Right ventricle myocardium superior (tissue), 1 donor: ENCODE measurements at regions of chr17 and their contacts with region 1.

Region 1: DNA sequence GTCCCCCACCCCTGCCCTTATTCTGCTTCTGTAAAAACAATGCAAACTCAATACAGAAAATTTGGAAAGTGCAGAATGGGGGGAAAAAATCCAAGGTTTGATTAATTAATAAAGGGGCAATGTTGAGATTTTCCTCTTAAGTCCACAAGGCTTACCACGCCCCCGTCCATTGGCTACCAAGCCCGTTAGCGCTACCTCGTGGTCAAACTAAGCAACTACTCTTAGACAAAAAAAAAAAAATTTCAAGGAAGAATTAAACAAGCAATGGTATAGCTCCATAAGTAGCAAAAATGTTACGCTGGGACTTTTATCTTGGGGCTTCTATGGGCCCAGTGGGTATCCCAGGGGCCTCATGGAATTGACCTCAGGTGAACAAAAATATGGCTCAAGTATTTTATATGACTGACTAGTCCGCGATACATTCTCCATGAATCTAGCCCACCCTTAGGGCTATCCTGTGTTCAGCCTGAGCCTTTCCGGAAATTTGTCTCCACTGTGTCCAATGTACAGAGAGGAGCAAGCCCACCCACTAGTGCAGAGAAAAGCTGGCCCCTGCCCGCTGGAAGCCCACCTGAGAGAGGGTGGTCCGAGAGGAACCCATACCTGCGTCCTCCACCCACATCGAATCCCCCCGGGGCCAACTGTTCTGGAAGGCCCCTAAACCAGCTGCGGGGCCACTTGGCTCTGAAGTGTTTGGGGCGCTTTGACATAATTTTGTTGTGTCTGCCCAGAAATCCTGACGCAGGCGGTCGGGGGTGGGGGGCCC is 19.1 kb upstream of the TEX2 start:
- DNase-seq: peak; percentile 54
- ATAC-seq: peak; percentile 62

Region 2: DNA sequence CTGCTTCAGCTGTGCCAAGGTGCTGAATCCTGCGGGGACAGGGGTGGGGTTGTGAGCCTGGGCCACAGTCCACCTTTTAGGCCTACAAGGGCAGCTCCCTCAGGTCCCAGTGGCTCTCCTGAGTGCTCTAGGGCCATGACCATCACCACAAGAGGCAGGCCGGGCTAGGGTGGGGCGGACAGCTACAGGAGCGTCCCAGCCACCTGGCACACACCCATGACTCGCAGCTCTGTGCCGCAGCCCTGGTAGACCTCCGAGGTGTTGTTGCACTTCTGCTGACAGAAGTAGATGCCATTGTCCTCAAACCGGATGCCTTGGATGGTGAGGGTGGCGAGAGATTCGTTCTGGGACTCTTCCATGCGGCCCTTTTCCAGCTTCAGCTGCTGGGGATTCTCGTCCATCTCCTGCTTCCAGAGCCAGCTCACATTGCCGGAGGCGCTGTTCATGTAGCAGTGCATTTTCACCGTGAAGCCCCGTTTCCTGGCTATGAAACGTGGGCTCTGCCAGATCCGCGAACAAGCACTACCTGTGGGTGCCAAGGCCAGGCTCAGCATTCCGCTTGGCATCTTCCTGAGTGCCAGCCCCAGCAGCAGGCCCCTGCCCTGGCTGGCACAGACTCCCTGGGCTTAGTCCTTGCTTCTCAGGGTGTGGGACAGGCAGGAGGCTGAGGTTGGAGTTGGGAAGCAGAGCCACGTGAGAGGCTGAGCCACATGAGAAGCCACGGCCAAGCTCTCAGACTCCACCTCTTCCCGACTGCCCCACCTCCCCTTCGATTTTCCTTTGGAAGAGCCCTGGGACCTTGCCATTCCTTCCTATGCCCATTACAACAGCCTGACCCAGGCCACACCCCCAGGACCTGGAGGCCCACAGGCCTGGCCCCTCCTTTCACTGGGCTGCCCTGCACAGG is 352.0 kb before region 1 on chr17:
- intact Hi-C with region 1: loop called (anchors 10 kb)
- DNase-seq: peak; percentile 50
- ATAC-seq: no peak

Region 3: DNA sequence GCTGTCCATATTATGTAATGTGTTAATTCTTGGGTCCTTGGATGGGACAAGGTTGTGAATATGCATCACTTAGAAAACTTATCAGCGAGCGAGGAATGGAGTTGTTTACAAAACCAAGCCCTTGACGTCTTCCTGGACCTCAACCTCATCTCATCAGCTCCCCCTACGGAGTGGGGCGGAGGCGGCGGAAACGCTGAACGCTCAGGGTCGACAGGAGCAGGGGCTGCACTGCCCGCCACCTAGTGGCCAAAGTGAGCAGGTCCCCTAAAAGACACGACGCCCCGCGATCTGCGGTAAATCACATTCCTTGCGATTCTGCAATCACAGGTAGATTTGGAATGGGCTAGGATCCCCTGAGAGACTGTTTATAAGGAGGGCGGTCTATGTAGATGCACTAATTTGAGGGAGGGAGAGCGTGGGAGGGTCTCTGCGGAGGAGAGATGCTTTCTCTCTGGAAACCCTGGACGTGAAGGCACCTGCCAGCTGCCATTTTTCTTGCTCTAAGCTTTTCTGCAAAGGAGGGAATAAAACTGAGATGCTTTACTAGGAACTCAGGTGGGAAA is 256.3 kb before region 1 on chr17:
- intact Hi-C with region 1: loop called (anchors 5 kb)
- DNase-seq: peak; percentile 87
- ATAC-seq: peak; percentile 83

Region 4: DNA sequence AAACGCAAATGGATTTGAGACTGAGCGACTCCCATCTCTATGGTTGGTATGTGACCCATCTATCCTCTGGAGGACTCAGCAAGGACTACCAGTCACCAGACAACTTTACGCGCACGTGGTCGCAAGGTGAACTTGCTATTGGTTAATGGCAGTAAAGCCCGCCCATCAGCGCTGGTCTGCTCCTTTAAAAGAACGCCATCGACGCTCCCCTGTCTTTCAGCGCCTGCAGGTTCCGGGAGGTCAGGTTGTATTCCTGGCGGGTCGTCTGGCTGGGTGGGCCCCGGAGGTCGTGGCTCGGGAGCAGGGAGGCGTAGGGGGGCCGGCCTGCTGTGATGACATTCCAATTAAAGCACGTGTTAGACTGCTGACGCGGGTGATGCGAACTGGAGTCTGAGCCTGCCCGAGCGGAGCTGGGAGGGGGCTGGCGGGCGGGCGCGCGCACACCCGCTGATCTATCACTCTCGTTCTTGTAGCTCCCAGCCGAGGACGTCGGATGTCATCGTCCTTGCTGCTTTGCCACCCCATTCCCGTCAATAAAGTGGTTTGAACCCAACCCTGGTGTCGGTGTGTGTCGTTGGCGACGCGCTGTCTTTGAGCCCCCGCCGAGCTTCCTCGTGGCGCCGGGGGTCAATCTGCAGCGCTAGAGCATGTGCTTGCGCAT is 136.3 kb before region 1 on chr17:
- intact Hi-C with region 1: loop called (anchors 5 kb)
- DNase-seq: peak; percentile 98
- ATAC-seq: peak; percentile 95